HEK293 (cell line): ENCODE measurements at regions of chr1 and their contacts with region 1.

Region 1: GRCh38 chr1:159132271-159132881 is 39.0 kb upstream of the CADM3 start:
- H3K4me3 ChIP-seq: no peak overlapping the region
- H3K27ac ChIP-seq: no peak overlapping the region
- H3K4me1 ChIP-seq: no peaks in the 10 kb centered on the region
- CTCF ChIP-seq: no peak

Region 2: GRCh38 chr1:159066108-159066507 is 66.3 kb before region 1 on chr1:
- CTCF ChIA-PET with region 1: no interaction called
- POLR2A ChIA-PET with region 1: no interaction called
- H3K4me3 ChIP-seq: no peak overlapping the region
- H3K27ac ChIP-seq: no peak overlapping the region
- H3K4me1 ChIP-seq: no peaks in the 10 kb centered on the region
- CTCF ChIP-seq: no peak

Region 3: GRCh38 chr1:159122005-159122621 is 10.3 kb before region 1 on chr1:
- CTCF ChIA-PET with region 1: interaction called, 11 read pairs
- POLR2A ChIA-PET with region 1: no interaction called
- H3K4me3 ChIP-seq: no peak overlapping the region
- H3K27ac ChIP-seq: no peak overlapping the region
- H3K4me1 ChIP-seq: no peaks in the 10 kb centered on the region
- CTCF ChIP-seq: no peak

Region 4: DNA sequence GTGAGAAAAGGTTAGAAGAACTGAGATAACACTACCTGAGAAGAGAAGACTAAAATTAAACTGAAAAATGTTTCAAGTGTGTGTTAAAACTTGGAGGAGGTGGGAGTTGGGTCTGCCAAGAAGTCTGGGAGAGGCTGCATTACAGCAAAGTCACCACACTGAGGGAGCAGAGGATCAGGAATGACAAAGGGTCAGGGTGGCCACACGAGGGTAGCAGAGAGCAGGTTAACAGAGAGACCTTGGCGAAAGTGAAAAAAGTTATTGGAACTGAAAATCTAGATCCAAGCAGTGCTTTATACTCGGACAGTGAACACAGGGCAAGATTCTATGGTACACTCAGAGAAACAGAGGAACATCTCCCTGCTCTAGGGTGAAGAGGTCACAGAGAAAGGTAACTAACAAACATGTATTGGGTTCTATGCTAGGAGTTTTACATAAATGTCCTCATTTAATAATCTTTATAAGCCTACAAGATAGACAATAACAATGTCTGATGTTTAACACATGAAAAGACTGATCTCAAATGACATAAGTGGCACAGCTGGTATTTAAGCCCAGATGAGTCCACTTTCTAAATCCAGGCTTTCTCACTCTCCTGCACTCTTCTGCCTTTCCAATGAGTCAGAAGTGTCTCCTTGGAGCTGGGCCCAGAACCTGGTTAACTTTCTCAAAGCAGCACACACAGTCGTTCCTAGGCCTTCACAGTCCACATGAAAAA is 28.8 kb after region 1 on chr1:
- CTCF ChIA-PET with region 1: interaction called, 37 read pairs
- POLR2A ChIA-PET with region 1: no interaction called
- H3K4me3 ChIP-seq: no peak overlapping the region
- H3K27ac ChIP-seq: no peak overlapping the region
- H3K4me1 ChIP-seq: no peaks in the 10 kb centered on the region
- CTCF ChIP-seq: peak; percentile 97

Region 5: GRCh38 chr1:159197561-159198557 is 65.5 kb after region 1 on chr1:
- CTCF ChIA-PET with region 1: interaction called, 28 read pairs
- POLR2A ChIA-PET with region 1: interaction called, 5 read pairs
- H3K4me3 ChIP-seq: no peak overlapping the region
- H3K27ac ChIP-seq: no peak overlapping the region
- H3K4me1 ChIP-seq: no peaks in the 10 kb centered on the region
- CTCF ChIP-seq: peak; percentile 43; the same call in 1 of the 2 replicates

Region 6: GRCh38 chr1:159207774-159208173 is 75.4 kb after region 1 on chr1:
- CTCF ChIA-PET with region 1: interaction called, 143 read pairs
- POLR2A ChIA-PET with region 1: no interaction called
- H3K4me3 ChIP-seq: no peak overlapping the region
- H3K27ac ChIP-seq: no peak overlapping the region
- H3K4me1 ChIP-seq: no peaks in the 10 kb centered on the region
- CTCF ChIP-seq: no peak

Region 7: GRCh38 chr1:159261721-159262487 is 129.5 kb after region 1 on chr1:
- CTCF ChIA-PET with region 1: no interaction called
- POLR2A ChIA-PET with region 1: no interaction called
- H3K4me3 ChIP-seq: no peak overlapping the region
- H3K27ac ChIP-seq: no peak overlapping the region
- H3K4me1 ChIP-seq: no peaks in the 10 kb centered on the region
- CTCF ChIP-seq: no peak